MCF 10A (cell line): ENCODE measurements at regions of chr12 and their contacts with region 1.

Region 1: DNA sequence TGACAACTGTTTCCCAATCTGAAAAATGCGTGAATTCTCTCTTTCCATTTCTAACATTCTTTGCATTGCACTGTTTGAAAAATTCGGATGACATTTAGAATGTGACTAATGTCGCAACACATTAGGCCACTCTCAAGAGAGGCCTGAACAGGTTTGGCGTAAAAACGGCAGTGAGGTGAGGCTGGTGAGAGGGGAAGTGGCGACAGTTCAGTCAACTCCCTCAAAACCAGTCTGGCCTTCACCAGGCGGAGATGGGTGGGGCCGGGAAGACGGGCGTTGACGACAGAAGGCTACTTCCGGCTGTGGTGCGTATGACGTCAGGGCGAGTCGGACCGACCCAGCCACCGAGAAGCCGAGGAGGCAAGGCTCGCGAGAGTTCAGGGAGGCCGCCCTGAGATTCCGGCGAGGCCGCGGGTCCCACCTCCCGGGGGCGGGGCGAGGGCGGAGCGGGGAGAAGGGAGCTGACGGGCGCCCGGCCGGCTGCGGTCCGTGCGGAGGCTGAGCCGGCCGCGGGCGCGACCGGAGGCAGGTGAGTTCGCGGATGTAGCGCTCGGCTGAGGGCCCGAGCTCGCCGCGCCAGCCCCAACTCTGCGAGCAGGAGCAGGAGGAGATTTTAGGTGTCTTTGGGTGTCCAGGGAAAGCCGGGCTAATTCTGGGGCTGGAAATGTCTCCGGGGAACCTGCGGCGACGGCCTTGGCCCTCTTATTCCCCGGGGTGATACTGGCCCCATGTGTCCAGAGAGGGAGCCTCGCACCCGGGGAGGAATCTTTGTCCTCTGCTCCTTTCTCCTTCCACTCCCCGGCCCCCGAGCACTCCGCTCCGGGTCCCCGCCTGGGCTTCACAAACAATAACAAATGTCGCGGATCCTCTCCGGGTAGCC is at the start of gene STK38L:
- DNase-seq: peak; percentile 95
- H3K4me3 Mint-ChIP-seq: peak within 1 kb of the TSS; percentile 99
- H3K27ac Mint-ChIP-seq: peak within 1 kb of the TSS; percentile 98
- H3K4me1 Mint-ChIP-seq: peaks cover 19% of the 10 kb centered on the region
- H3K27me3 Mint-ChIP-seq: no peaks in the 10 kb centered on the region
- CTCF ChIP-seq: peak; percentile 22
- total RNA-seq, gene STK38L: 18.1 and 19.9 TPM in 2 replicates

Region 2: GRCh38 chr12:26937875-26938700 is 306.0 kb before region 1 on chr12 and contains the starts of genes FGFR1OP2 and INTS13:
- CTCF ChIA-PET with region 1: no interaction called
- POLR2A ChIA-PET with region 1: interaction called, 3 read pairs
- intact Hi-C with region 1: loop called (anchors 1 kb)
- DNase-seq: peak; percentile 99
- H3K4me3 Mint-ChIP-seq: peak within 1 kb of the TSS; percentile 91
- H3K27ac Mint-ChIP-seq: peak within 1 kb of the TSS; percentile 97
- H3K4me1 Mint-ChIP-seq: peaks cover 45% of the 10 kb centered on the region
- H3K27me3 Mint-ChIP-seq: no peaks in the 10 kb centered on the region
- CTCF ChIP-seq: no peak
- total RNA-seq, gene FGFR1OP2: 40.6 and 44.6 TPM in 2 replicates
- total RNA-seq, gene INTS13: 64.8 and 67.8 TPM in 2 replicates

Region 3: GRCh38 chr12:27179400-27180214 is 64.4 kb before region 1 on chr12:
- CTCF ChIA-PET with region 1: interaction called, 3 read pairs
- POLR2A ChIA-PET with region 1: interaction called, 34 read pairs
- intact Hi-C with region 1: no loop called
- DNase-seq: peak; percentile 94
- H3K4me3 Mint-ChIP-seq: no peak overlapping the region
- H3K27ac Mint-ChIP-seq: peak overlapping the region; percentile 49
- H3K4me1 Mint-ChIP-seq: peaks cover 28% of the 10 kb centered on the region
- H3K27me3 Mint-ChIP-seq: no peaks in the 10 kb centered on the region
- CTCF ChIP-seq: no peak

Region 4: DNA sequence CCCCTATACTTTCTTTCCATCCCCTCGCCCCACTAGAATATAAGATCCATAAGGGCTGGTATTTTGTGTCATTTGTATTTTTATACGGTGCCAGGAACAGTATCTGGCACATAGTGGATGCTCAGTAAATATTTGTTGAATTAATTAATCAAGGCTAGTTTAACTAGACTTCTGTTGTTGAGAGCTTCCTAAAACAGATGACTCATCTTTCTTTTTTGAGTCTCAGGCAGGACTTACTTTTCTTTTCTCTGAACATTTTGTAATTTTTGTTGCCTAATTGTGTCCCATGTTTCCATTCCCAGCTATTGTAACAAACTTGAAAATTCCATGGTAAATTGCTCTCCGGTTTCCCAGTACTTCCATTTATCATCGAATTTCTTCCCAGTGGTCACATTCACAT is 16.7 kb after region 1 on chr12:
- CTCF ChIA-PET with region 1: no interaction called
- POLR2A ChIA-PET with region 1: interaction called, 27 read pairs
- intact Hi-C with region 1: no loop called
- DNase-seq: peak; percentile 51
- H3K4me3 Mint-ChIP-seq: peak overlapping the region; percentile 40
- H3K27ac Mint-ChIP-seq: peak overlapping the region; percentile 94
- H3K4me1 Mint-ChIP-seq: peaks cover 36% of the 10 kb centered on the region
- H3K27me3 Mint-ChIP-seq: no peaks in the 10 kb centered on the region
- CTCF ChIP-seq: no peak

Region 5: GRCh38 chr12:27332407-27333301 is 88.6 kb after region 1 on chr12 and contains the start of gene BMAL2:
- CTCF ChIA-PET with region 1: no interaction called
- POLR2A ChIA-PET with region 1: interaction called, 11 read pairs
- intact Hi-C with region 1: no loop called
- DNase-seq: peak; percentile 36
- H3K4me3 Mint-ChIP-seq: peak within 1 kb of the TSS; percentile 86
- H3K27ac Mint-ChIP-seq: peak within 1 kb of the TSS; percentile 98
- H3K4me1 Mint-ChIP-seq: peaks cover 47% of the 10 kb centered on the region
- H3K27me3 Mint-ChIP-seq: no peaks in the 10 kb centered on the region
- CTCF ChIP-seq: no peak
- total RNA-seq, gene BMAL2: 18.0 and 20.0 TPM in 2 replicates

Region 6: GRCh38 chr12:27498149-27498548 is 254.1 kb after region 1 on chr12:
- CTCF ChIA-PET with region 1: no interaction called
- POLR2A ChIA-PET with region 1: no interaction called
- intact Hi-C with region 1: no loop called
- DNase-seq: no peak
- H3K4me3 Mint-ChIP-seq: no peak overlapping the region
- H3K27ac Mint-ChIP-seq: no peak overlapping the region
- H3K4me1 Mint-ChIP-seq: no peaks in the 10 kb centered on the region
- H3K27me3 Mint-ChIP-seq: no peaks in the 10 kb centered on the region
- CTCF ChIP-seq: no peak